ENCODE measurements at regions of chr6 and their contacts with region 1.

Region 1: GRCh38 chr6:163338671-163339405 is 75.7 kb upstream of the QKI start:
- DNase-seq: peak; percentile 82

Region 2: DNA sequence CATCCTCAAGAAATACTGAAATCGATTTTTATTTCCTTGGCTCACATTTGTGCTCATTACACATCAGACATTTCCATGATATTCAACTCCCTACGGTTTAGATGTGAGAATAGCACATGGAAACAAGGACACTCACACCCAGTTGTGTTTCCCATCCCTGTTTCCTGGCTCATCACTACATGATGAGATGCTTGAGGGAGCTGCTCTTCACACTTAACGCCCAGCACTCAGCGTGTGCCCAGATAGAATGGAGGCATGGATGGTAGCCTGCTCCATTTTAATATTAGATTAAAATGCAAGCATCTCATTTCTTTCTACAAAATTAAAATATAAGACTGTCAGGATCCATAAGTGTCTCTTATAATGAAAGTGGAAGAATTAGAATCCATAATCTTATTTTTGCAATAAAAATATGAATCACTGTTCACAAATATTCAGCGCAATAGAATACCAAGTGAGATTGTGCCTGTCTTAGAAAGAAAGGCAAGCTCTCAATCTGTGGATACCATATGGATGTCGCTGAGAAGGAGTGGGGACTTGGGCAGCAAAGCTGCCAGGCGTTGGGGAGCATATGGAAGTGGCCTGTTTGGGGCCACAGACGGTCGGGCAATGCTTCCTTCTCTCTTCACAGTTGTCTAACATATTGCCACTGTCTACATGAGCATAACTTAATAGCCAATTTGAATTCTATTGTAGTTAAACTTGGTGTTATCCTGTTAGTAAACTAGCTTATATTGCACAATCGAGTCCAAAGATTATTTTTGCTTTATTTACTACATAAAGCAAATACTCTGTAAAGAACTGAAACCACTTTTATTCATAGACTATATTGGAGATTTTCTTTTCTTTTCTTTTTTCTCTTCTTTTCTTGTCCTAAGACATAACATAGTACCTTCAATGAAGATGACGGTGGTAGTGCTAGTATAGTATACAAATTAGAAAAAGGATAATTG is 131.1 kb before region 1 on chr6:
- intact Hi-C with region 1: loop called (anchors 5 kb)
- DNase-seq: no peak

Region 3: DNA sequence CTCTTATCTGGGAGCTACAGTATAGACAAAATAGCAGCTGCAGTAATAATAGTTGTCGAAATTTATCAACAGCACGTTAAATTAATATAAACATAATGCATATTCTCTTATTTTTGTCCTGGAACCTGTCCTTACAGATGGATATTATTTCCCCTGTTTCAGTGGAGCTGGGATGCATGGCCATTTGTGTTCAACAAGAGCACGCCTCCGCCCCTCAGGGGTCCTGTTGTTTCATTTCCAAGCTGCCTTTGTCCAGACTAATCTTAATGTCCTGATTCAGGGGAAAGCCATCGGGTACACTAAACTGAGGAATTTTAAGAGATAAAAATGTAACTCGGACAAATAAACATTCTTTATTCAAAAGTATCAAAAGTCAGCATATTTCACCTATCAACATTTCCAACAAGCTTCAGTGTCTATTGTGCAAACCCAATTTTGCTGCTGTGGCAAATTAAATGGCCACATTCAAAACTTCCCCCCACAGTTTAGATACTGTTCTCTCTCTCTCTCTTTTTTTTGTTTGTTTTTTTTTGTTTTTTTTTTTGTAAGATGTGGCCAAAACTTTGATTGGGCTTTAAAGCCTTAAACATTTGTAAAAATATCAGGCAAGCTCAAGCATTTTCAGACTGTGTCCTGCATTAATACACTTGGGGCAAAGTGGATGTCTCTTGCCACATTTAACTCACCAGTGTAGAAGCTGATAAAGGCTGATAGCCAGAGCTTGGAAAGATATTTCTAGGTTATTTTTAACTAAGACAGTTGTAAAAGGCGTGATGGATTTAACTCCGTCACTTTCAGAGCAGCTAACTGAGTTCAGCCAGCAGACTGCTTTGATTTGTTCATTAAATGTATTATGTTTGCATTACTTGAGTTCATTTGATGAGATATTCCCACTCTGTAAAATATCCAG is 36.9 kb before region 1 on chr6:
- intact Hi-C with region 1: loop called (anchors 5 kb)
- DNase-seq: no peak